ENCODE measurements at regions of chr2 and their contacts with region 1.

Region 1: GRCh38 chr2:59314031-59314766 is 1073.1 kb upstream of the FANCL start:
- DNase-seq: no peak
- ATAC-seq: no peak
- H3K4me3 ChIP-seq: no peak overlapping the region
- H3K27ac ChIP-seq: no peak overlapping the region
- H3K4me1 ChIP-seq: no peaks in the 10 kb centered on the region
- CTCF ChIP-seq: no peak
- EP300 ChIP-seq: no peak
- POLR2A ChIP-seq: no peak
- RAD21 ChIP-seq: no peak

Region 2: DNA sequence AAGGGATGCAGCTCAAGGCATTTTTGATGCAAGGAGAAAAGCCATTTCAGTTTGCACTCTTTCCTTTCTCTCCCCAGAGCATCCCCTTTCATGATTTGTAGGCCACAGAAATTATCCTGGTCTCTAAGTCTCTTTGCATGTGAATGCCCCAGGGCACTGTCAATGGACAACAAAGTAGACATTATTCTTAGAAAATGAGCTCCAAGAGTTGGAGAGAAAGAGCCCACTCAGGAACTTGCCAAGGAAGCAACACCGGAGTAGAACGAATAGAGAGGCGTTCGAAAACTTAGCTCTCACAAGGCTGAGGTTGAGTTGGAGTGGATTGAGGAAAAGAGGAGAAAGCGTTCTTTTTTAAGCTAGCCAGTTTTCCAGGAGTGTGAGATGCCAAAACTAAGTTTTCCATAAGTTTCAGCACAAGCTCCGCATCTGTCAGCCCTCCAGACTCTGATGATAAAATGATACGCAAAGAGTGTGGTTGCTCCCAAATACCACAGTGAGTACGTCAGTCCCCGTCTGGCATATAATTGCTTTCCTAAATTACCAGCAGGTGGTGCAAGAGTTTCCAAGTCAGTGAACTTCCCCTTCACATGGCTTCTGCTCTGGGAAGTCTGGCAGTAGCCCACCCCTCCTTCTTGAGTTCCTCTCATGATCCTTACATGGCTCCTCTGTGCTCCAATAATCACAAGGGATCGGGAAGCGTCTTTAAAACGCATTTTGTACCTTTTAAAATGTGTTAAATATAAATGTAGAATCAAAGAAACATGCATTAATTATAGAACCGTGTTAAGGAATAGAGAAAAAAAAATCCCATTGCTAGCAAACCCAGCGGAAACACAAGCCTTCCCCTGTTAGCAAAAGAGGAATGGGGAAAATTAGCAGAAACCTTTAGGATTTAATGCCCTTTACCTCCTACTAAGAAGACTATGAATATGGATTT is 12.5 kb before region 1 on chr2:
- CTCF ChIA-PET with region 1: interaction called, 11 read pairs
- POLR2A ChIA-PET with region 1: no interaction called
- DNase-seq: peak; percentile 7 to 70
- ATAC-seq: peak; percentile 92 to 94
- H3K4me3 ChIP-seq: no peak overlapping the region
- H3K27ac ChIP-seq: no peak overlapping the region
- H3K4me1 ChIP-seq: no peaks in the 10 kb centered on the region
- CTCF ChIP-seq: peak; percentile 57
- EP300 ChIP-seq: no peak
- POLR2A ChIP-seq: no peak
- RAD21 ChIP-seq: peak; percentile 55 to 62

Region 3: GRCh38 chr2:59584958-59585357 is 270.8 kb after region 1 on chr2:
- CTCF ChIA-PET with region 1: no interaction called
- POLR2A ChIA-PET with region 1: no interaction called
- DNase-seq: peak in 1 of 2 experiments; percentile 11
- ATAC-seq: no peak
- H3K4me3 ChIP-seq: no peak overlapping the region
- H3K27ac ChIP-seq: no peak overlapping the region
- H3K4me1 ChIP-seq: no peaks in the 10 kb centered on the region
- CTCF ChIP-seq: no peak; the same call in 2 of the 3 replicates
- EP300 ChIP-seq: no peak
- POLR2A ChIP-seq: no peak
- RAD21 ChIP-seq: peak; percentile 14 to 17; a peak in 1 of 5 replicates